ENCODE measurements at regions of chr4 and their contacts with region 1.

Region 1: DNA sequence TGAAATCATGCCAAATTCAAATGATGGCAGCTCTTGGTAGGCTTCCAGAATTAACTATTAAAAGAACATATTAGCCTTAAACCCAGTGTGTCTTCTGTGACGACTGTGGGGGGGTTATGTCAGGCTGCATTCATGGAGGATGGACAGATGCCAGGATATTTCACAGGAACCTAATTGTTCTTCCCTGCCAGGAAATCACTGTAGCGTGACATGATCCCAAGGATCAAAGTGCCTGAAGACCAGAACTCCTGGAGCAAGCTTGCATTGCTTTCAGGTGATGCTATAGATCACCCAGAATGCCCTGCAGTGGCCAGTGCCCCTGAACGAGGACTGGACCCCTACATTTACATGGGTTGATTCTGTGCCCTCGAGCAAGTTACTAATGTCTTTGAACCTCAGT is 1093.0 kb upstream of the TENM3 start:
- DNase-seq: no peak
- H3K4me3 ChIP-seq: no peak overlapping the region
- H3K27ac ChIP-seq: no peak overlapping the region
- H3K4me1 ChIP-seq: no peaks in the 10 kb centered on the region
- H3K27me3 ChIP-seq: no peaks in the 10 kb centered on the region
- CTCF ChIP-seq: no peak

Region 2: DNA sequence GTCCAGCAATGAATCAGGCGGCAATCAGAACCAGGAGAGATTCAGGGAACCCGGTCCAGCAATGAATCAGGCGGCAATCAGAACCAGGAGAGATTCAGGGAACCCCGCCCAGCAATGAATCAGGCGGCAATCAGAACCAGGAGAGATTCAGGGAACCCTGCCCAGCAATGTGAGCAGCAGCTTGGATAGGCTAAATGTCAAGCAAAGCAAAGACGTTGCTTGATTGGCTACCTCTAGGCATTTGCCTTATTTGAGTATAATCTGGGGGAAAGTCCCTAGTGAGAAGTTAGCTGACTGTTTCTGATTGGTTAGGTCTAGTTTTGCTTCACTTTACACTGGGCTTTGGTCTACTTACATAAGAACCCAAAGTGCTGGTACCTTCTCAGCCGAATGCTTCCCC is 119.2 kb before region 1 on chr4:
- dilution Hi-C with region 1: no loop called
- DNase-seq: no peak
- H3K4me3 ChIP-seq: no peak overlapping the region
- H3K27ac ChIP-seq: no peak overlapping the region
- H3K4me1 ChIP-seq: no peaks in the 10 kb centered on the region
- H3K27me3 ChIP-seq: no peaks in the 10 kb centered on the region
- CTCF ChIP-seq: no peak

Region 3: DNA sequence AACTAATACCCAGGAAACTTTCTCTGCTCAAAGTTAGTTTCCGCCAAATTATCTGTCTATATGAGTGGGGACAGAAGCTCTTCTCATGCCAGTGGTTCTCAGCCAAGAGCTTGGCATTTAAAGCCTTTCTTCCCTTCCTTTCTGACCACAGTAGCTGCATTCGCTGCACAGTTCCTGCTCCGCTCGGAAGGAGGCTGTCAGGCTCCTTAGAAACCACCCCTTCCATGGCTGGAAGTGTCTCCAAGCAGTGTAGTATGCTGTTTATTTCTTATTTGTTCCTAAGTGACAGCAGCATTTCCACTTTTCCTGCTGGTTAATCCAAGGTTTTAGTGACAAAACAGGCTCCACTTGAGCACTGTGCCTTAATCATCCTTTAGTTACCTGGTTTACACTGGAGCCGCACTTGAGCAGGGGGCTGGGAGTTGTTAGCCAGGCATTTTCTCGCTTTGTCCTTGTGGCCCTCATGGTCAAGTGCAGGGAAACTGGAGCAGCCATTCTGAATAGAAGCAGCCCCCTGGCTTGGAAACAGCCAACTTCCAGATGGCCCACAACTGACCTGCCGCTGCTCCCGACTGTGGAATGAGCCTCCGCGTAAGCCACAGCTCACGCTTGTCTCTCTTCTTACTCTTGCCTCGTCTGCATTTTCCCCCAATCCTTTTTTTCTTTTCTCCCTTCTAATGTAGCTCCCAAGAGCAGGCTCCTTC is 353.6 kb after region 1 on chr4:
- dilution Hi-C with region 1: loop called (anchors 25 kb)
- DNase-seq: no peak
- H3K4me3 ChIP-seq: no peak overlapping the region
- H3K27ac ChIP-seq: no peak overlapping the region
- H3K4me1 ChIP-seq: no peaks in the 10 kb centered on the region
- H3K27me3 ChIP-seq: no peaks in the 10 kb centered on the region
- CTCF ChIP-seq: no peak

Measured in keratinocyte (primary cell).